Right ventricle myocardium inferior (tissue), 1 donor: ENCODE measurements at regions of chr1 and their contacts with region 1.

Region 1: DNA sequence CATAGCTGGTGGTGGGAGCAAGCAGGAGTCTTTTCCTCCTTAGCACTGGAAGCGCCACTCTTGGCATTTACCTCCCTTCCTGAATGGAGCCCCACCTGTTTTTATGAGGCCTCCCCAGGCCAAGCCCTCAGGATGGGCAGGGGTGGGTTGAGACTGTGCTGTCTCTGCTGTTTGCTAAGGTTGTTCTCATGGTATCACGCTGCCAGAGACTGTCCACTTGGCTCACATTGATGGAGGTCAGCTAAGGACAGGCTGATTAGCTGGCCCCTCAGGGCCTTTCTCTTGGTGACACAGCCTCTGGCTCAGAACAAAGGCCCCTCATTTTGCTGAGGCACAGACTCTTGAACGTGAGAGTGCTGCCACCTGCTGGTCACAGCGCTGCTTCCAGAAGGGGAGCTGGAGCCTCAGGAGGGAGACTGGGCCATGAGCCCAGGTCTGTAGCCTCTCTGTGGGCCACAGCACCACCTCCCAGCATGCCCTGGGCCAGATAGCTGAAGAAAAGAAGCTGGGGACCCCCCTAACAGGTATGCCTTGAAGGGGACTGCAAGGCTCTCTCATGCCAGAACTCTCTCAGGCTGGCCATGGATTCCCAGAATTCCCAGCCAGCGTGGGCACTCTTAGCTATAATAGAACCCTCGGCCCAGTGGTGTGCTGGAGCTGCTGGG is 85.6 kb downstream of the CD58 start:
- DNase-seq: peak; percentile 93
- ATAC-seq: peak; percentile 85

Region 2: DNA sequence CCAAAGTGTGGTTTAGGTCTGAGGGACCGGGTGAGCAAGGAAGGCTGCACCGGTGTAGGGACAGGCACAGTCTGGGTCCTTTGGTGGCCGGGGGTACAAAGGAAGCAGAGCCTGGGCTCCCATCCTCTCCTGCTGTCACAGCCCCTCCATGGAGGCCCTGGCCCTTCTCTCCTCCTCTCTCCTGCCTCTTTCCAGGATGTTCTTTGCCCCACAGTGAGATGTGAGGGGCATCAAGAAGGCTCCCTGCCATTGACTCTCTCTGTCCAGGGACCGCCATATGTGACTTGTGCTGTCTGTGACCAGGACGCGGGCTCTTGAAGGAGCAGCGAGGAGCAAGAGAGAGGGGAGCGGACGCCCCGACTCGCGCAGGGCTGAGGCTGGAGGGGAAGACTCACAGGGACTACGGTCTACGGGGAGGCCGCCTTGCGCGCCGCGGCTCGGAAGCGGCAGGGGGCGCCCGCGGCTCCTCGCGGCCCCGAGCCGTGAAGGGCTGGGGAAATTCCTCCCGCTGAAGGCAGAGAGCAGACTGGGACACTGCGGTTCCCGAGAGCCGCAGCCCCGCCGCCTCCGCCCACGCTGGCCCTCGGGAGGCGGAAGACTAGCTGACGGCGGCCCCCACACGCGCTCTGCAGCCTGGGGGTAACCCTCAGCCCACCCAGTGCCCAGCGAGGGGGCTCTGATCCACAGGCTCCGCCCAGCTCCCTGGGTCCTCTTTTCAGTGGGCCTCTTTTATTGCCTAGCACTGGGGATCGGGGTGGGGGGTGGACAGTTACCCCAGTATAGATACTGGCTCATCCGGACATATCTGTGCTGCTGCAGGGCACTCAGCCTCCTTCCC is 333.2 kb before region 1 on chr1:
- intact Hi-C with region 1: loop called (anchors 5 kb)
- DNase-seq: peak; percentile 86
- ATAC-seq: peak; percentile 97

Region 3: GRCh38 chr1:116360429-116361173 is 124.6 kb before region 1 on chr1:
- intact Hi-C with region 1: loop called (anchors 2 kb)
- DNase-seq: no peak
- ATAC-seq: no peak